Heart right ventricle (tissue), 16 donors: ENCODE measurements at regions of chr2 and their contacts with region 1.

Region 1: DNA sequence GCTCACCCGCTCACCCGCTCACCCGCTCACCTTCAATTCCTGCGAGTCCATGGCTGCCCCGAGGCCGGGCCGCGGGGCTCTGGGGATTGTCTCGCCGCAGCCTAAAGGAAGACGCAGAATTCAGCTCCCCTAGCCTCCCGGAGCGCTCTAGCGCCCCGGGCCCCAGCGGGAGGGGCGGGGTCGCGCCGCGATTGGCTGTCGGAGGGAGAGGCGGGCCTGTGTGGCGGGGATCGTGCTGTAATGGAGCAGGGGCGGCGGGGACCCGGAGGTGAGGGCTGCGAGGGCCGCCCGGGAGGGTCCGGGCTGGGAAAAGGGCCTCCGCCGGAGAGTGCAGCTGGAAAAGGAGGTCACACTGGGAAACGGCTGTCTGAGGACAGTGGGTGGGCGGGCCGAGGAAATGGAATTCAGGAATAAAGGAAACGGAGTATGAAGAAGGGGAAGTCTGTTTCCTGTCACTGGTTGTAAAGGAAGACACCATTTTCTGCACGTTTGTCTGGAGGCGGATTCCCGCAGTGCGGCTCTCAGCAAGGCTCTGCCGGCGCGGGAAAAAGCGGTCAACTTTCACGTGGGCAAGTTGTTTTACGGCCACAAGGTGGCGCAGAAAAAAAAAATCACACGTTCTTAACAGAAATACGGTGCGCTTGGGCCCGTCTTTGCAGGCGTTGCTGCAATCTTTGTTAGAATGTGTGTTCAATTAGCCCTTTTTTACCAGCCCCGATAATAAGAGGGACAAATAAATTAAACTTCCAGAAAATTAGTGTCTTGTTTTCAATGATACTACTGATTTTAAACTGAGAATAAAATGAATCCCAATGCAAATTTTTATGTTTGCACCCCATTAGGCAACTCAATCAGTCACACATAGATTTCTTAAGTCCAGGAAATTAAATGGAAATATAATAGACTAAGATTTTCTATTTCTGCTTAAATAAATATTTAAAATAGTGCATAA is at the start of gene TTC21B:
- DNase-seq: peak; percentile 96
- ATAC-seq: peak; percentile 99 to 100 (median 100)
- H3K4me3 ChIP-seq: peak within 1 kb of the TSS; percentile 59 to 84 (median 79)
- H3K27ac ChIP-seq: peak within 1 kb of the TSS; percentile 56 to 92 (median 84)
- H3K4me1 ChIP-seq: peaks cover 3 to 35% (median 20%) of the 10 kb centered on the region in 9 donors
- H3K27me3 ChIP-seq: no peaks in the 10 kb centered on the region
- CTCF ChIP-seq: peak; percentile 75 to 89 (median 85)
- total RNA-seq, gene TTC21B: 10.9 to 17.9 (median 13.4) TPM

Region 2: GRCh38 chr2:165933211-165933610 is 20.7 kb before region 1 on chr2:
- intact Hi-C with region 1: loop called in 1 of 10 experiments (anchors 1 kb)
- DNase-seq: no peak
- ATAC-seq: no peak
- H3K4me3 ChIP-seq: no peak overlapping the region
- H3K27ac ChIP-seq: no peak overlapping the region
- H3K4me1 ChIP-seq: no peaks in the 10 kb centered on the region
- H3K27me3 ChIP-seq: no peaks in the 10 kb centered on the region
- CTCF ChIP-seq: no peak

Region 3: GRCh38 chr2:166180951-166181812 is 227.3 kb after region 1 on chr2:
- intact Hi-C with region 1: loop called in 1 of 10 experiments (anchors 5 kb)
- DNase-seq: peak; percentile 8 to 10
- ATAC-seq: peak in 6 of 8 donors; percentile 38 to 58 (median 56)
- H3K4me3 ChIP-seq: no peak overlapping the region
- H3K27ac ChIP-seq: no peak overlapping the region
- H3K4me1 ChIP-seq: no peaks in the 10 kb centered on the region
- H3K27me3 ChIP-seq: peaks cover 0 to 16% (median 0%) of the 10 kb centered on the region in 7 donors
- CTCF ChIP-seq: peak in 8 of 9 donors; percentile 10 to 56 (median 50)